Calu3 (cell line): ENCODE measurements at regions of chr7 and their contacts with region 1.

Region 1: DNA sequence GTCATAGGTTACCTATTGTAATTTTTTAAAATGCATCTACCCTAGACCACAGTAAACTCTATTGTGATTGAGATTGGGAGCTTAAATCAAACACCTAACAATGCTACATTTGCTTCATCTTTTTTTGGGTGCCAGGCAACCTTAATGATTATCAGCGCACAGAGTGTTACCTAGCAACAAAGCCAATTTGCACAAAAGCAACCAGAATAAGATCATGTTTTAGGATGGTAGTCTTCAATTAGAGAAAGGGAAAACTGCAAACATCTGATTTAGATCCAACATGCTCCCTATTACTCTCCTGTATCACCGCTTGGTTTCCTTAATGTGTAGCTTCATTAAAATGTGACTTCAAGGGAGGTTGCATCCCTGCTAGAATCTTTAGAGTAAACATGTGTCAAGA is 226.9 kb downstream of the ABCA13 start:
- DNase-seq: no peak
- H3K4me3 Mint-ChIP-seq: no peak overlapping the region
- H3K27ac Mint-ChIP-seq: no peak overlapping the region
- H3K4me1 Mint-ChIP-seq: no peaks in the 10 kb centered on the region
- H3K27me3 Mint-ChIP-seq: no peaks in the 10 kb centered on the region
- CTCF ChIP-seq: no peak

Region 2: DNA sequence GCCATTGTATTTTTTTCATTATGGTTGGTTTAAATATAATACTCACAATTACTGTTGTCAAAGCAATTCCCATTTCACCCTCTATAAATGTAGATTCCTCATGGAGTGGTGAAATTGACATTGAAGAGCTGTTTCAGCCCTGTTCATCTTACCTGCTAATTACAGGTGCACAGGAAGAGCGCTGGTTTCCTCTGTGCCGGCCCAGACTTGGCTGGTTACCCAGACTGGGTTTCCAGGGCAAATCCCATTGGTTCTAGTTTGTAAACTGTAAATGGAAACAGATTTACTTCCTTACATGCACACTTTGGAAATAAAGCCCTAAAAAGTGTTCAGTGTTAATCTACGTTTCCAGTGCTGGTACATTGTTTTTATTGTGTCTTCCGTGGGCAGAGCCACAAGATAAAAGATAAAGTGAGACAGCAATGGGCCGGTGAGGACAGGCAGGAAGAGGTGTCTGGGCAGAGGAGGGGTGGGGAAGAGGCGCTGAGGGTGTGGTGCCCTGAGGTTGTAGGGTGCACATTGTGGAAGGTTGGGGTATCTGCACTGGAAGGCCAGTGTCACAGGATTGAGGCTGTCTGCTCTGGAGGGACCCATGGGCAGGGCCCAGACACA is 1766.5 kb after region 1 on chr7:
- CTCF ChIA-PET with region 1: no interaction called
- intact Hi-C with region 1: loop called (anchors 5 kb)
- DNase-seq: no peak
- H3K4me3 Mint-ChIP-seq: no peak overlapping the region
- H3K27ac Mint-ChIP-seq: no peak overlapping the region
- H3K4me1 Mint-ChIP-seq: no peaks in the 10 kb centered on the region
- H3K27me3 Mint-ChIP-seq: peaks cover 28% of the 10 kb centered on the region
- CTCF ChIP-seq: no peak